B cell (primary cell): ENCODE measurements at regions of chr3 and their contacts with region 1.

Region 1: GRCh38 chr3:188693435-188693834 is 478.3 kb upstream of the TPRG1 start:
- DNase-seq: no peak
- ATAC-seq: no peak
- H3K4me3 ChIP-seq: no peak overlapping the region
- H3K4me3 Mint-ChIP-seq: no peak overlapping the region
- H3K27ac ChIP-seq: no peak overlapping the region
- H3K27ac Mint-ChIP-seq: no peak overlapping the region
- H3K4me1 ChIP-seq: peaks cover 5 to 15% of the 10 kb centered on the region in 2 donors
- H3K4me1 Mint-ChIP-seq: peaks cover 34% of the 10 kb centered on the region
- H3K27me3 ChIP-seq: no peaks in the 10 kb centered on the region
- H3K27me3 Mint-ChIP-seq: no peaks in the 10 kb centered on the region
- CTCF ChIP-seq: no peak

Region 2: GRCh38 chr3:188607805-188608315 is 85.6 kb before region 1 on chr3:
- CTCF ChIA-PET with region 1: no interaction called
- POLR2A ChIA-PET with region 1: no interaction called
- intact Hi-C with region 1: loop called (anchors 5 kb)
- DNase-seq: no peak
- ATAC-seq: no peak
- H3K4me3 ChIP-seq: no peak overlapping the region
- H3K4me3 Mint-ChIP-seq: no peak overlapping the region
- H3K27ac ChIP-seq: no peak overlapping the region
- H3K27ac Mint-ChIP-seq: no peak overlapping the region
- H3K4me1 ChIP-seq: no peaks in the 10 kb centered on the region
- H3K4me1 Mint-ChIP-seq: peaks cover 12% of the 10 kb centered on the region
- H3K27me3 ChIP-seq: no peaks in the 10 kb centered on the region
- H3K27me3 Mint-ChIP-seq: no peaks in the 10 kb centered on the region
- CTCF ChIP-seq: no peak